ENCODE measurements at regions of chr19 and their contacts with region 1.

Region 1: DNA sequence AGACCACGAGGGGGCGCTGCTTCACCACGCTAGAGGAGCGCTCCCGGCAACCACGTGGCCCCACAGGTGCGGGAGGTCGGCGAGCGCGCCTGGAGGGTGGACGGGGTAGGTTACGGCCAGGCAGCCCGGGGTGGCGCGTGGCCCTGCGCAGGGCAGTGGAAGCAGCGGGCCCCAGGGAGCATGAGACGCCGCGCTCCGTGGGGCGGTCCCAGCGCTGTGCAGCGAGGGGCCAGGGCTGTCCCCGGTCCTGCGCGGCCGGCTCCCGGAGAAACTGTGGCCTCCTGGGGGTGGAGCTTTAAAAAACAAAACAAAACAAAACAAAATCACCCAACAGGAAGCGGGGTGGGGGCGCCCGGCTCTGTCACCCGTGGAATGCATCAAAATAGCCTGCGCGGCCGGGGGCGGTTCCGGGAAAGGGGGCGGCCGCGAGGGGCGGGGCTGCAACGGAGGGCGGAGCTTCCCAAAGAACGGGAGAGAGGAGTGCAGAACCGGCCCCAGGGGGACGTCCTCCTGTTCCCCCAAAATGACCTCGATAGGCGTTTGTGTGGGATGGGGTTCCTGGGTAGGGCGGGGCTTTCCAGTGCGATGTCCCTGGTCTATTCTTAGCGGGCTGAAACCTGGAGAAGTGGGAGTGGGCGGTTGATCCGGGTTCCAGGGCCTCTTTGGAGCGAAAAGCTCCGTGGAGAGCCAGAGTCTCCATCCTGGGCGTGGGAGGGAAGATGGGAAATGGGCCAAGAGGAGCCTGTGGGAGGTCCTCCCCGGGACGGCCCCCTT is 27.3 kb downstream of the NUMBL start:
- DNase-seq: peak; percentile 94
- H3K4me3 ChIP-seq: peak overlapping the region; percentile 51 to 79
- H3K27ac ChIP-seq: peak overlapping the region; percentile 81 to 84
- H3K4me1 ChIP-seq: peaks cover 9% of the 10 kb centered on the region
- H3K27me3 ChIP-seq: no peaks in the 10 kb centered on the region
- CTCF ChIP-seq: peak; percentile 98 to 99 (median 99)
- POLR2A ChIP-seq: no peak

Region 2: DNA sequence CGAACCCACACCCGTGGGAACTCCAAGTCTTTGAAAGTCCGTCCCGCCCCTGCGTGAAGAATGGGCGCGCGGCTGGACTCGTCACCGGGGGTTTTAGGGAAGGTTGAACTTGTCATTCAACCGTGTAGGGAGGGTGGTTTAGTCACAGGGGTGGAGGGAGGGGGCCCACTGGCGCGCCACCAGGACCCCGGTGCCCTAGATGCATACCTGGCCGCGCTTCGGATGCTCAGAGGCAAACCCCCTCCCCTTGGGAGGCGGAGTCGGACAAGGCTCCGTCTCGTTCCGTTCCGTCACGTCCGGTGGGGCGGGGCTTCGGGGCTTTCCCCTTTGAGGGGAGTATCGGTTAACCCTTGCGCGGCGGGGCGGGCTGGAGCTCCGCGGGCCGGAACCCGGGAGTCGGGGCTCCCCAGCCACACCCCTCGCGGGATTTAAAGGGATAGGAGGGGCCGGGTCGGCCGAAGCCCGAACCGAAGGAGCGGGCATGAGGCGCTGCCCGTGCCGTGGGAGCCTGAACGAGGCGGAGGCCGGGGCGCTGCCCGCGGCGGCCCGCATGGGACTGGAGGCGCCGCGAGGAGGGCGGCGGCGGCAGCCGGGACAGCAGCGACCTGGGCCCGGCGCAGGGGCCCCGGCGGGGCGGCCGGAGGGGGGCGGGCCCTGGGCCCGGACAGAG is 53.7 kb after region 1 on chr19 and contains the starts of genes COQ8B and ITPKC:
- intact Hi-C with region 1: loop called (anchors 5 kb)
- DNase-seq: peak; percentile 100
- H3K4me3 ChIP-seq: peak within 1 kb of the TSS; percentile 73 to 87
- H3K27ac ChIP-seq: peak within 1 kb of the TSS; percentile 90 to 98
- H3K4me1 ChIP-seq: peaks cover 48% of the 10 kb centered on the region
- H3K27me3 ChIP-seq: no peaks in the 10 kb centered on the region
- CTCF ChIP-seq: peak in 2 of 3 experiments; percentile 23 to 33
- POLR2A ChIP-seq: peak; percentile 94
- total RNA-seq, gene COQ8B: 56.6 to 71.7 TPM
- total RNA-seq, gene ITPKC: 19.2 to 20.8 TPM

Region 3: GRCh38 chr19:40815223-40815814 is 152.2 kb after region 1 on chr19:
- intact Hi-C with region 1: loop called (anchors 5 kb)
- DNase-seq: no peak
- H3K4me3 ChIP-seq: no peak overlapping the region
- H3K27ac ChIP-seq: no peak overlapping the region
- H3K4me1 ChIP-seq: peaks cover 42% of the 10 kb centered on the region
- H3K27me3 ChIP-seq: no peaks in the 10 kb centered on the region
- CTCF ChIP-seq: no peak
- POLR2A ChIP-seq: no peak

Region 4: DNA sequence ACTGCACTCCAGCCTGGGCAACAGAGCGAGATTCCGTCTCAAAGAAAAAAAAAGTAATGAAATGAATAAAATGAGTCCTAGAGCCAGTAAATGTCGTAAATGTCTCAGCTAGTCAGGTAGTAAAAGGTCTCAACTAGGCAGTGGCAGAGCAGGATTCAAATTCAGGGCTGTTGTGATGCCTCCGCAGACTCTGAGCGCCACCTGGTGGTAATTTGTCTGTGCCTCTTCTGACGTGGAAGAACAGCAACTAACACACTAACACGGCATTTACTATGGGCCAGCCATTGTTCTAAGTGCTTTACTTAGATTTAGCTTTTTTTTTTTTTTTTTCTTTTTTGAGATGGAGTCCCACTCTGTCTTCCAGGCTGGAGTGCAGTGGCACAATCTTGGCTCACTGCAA is 481.3 kb after region 1 on chr19:
- intact Hi-C with region 1: loop called (anchors 10 kb)
- DNase-seq: peak; percentile 94
- H3K4me3 ChIP-seq: no peak overlapping the region
- H3K27ac ChIP-seq: no peak overlapping the region
- H3K4me1 ChIP-seq: no peaks in the 10 kb centered on the region
- H3K27me3 ChIP-seq: no peaks in the 10 kb centered on the region
- CTCF ChIP-seq: peak; percentile 59 to 83 (median 63)
- POLR2A ChIP-seq: no peak